A673 (cell line): ENCODE measurements at regions of chr2 and their contacts with region 1.

Region 1: GRCh38 chr2:231482806-231483391 is 18.6 kb upstream of the NCL start:
- DNase-seq: peak; percentile 71
- H3K4me3 ChIP-seq: peak overlapping the region; percentile 22
- H3K27ac ChIP-seq: peak overlapping the region; percentile 50
- H3K4me1 ChIP-seq: no peaks in the 10 kb centered on the region
- H3K27me3 ChIP-seq: no peaks in the 10 kb centered on the region
- CTCF ChIP-seq: peak; percentile 93

Region 2: DNA sequence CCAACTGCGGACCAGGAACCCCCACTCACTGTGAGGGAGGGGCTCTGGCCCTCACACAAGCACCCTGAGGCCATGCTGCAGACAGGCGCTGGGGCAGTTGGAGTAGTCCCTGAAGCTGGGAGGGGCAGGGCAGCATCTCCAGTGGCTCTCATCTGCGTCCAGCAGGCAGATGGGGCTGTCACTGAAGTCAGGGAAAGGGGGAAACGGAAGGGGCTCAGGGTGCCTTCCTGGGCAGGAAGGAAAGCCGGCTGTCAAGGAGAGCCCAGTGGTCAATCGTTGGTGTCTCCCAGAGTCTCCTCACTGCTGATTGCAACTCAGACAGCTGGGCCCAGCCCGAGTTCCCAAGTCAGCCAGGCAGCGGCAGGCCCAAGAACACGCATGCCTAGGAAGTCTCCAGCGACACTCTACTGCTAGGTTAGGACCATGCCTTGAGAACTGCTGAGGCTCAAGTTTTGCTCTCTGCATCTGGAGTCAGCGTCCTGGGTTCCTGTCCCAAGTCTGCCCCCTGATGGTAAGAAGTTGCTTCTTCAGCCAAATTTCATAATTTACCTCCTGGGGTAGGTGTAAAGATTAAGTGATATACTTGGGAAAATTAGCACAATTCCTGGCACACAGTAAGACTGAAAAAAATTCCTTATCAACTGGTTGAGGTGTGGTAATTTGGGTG is 74.8 kb after region 1 on chr2:
- CTCF ChIA-PET with region 1: interaction called, 11 read pairs
- POLR2A ChIA-PET with region 1: no interaction called
- intact Hi-C with region 1: loop called (anchors 1 kb)
- DNase-seq: peak; percentile 83
- H3K4me3 ChIP-seq: no peak overlapping the region
- H3K27ac ChIP-seq: no peak overlapping the region
- H3K4me1 ChIP-seq: no peaks in the 10 kb centered on the region
- H3K27me3 ChIP-seq: no peaks in the 10 kb centered on the region
- CTCF ChIP-seq: peak; percentile 75